ENCODE measurements at regions of chr18 and their contacts with region 1.

Region 1: DNA sequence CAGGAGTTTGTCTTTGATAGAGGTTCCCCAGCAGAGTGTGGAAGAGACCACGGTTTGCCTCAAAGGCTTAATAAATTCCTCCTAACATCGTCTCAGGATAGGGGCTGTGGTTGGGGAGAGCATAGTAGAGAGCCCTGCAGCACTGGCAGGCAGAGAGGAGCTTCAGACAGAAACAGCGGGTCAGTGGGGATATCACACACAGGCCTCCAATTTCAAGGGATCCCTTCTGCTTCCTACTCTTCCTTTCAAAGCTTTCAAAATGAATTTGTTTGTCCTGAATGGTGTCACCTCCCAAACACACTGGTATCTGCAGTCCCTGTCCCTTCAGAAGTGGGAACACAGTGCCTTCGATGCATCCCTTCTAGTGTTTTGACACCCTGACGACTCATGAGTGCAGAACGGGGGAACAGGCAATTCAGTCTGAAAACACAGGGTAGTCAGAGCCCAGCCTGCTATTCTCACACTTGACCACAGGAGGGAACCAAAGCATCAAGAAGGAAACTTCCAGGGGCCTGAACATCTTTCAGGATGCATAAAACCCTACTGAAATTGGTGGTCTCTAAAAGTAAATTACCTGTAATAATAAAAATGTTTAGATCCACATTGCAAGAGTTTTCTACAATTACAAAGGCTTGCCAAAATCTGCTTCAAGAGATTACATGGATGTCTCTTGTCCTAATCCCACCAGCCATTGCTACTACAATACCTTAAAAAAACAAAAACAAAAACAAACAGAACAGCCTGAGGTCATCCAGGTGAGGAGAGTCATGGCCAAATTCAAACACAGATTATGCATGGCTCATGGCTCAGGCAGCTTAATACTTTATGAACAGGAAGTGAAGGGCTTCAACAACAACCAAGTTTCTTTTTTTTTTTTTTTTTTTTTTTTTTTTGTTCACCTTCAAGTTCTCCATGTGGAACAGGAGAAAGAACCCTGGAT is 49.8 kb downstream of the SLC14A2 start:
- DNase-seq: peak; percentile 75
- H3K4me3 Mint-ChIP-seq: no peak overlapping the region
- H3K27ac Mint-ChIP-seq: peak overlapping the region; percentile 85
- H3K4me1 Mint-ChIP-seq: peaks cover 55% of the 10 kb centered on the region
- H3K27me3 Mint-ChIP-seq: peaks cover 2% of the 10 kb centered on the region

Region 2: DNA sequence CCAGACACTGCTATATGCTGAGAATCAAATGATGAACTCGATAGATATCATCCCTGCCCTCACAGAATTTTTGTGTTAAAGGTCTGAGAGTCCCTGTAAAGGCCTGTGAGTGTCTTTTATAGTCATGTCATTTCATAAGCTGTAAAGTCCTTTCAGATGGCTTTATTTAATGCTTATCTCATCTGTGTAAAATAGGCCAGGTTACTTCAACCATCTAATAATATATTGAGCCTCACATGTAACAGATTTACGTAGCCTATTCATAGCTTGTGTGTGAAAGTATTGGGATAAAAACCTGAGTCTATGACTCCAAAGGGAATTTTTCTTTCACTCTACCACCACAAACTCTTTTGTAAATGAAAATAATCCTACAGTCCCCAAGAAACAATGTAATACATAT is 1715.8 kb before region 1 on chr18:
- CTCF ChIA-PET with region 1: no interaction called
- POLR2A ChIA-PET with region 1: no interaction called
- DNase-seq: no peak
- H3K4me3 Mint-ChIP-seq: no peak overlapping the region
- H3K27ac Mint-ChIP-seq: no peak overlapping the region
- H3K4me1 Mint-ChIP-seq: no peaks in the 10 kb centered on the region
- H3K27me3 Mint-ChIP-seq: no peaks in the 10 kb centered on the region

Region 3: GRCh38 chr18:45503990-45504389 is 161.1 kb before region 1 on chr18:
- CTCF ChIA-PET with region 1: no interaction called
- POLR2A ChIA-PET with region 1: no interaction called
- DNase-seq: no peak
- H3K4me3 Mint-ChIP-seq: no peak overlapping the region
- H3K27ac Mint-ChIP-seq: no peak overlapping the region
- H3K4me1 Mint-ChIP-seq: no peaks in the 10 kb centered on the region
- H3K27me3 Mint-ChIP-seq: peaks cover 3% of the 10 kb centered on the region

Region 4: GRCh38 chr18:45686891-45687611 is 22.0 kb after region 1 on chr18:
- CTCF ChIA-PET with region 1: interaction called, 21 read pairs
- POLR2A ChIA-PET with region 1: interaction called, 4 read pairs
- DNase-seq: peak; percentile 76
- H3K4me3 Mint-ChIP-seq: peak overlapping the region; percentile 81
- H3K27ac Mint-ChIP-seq: peak overlapping the region; percentile 97
- H3K4me1 Mint-ChIP-seq: peaks cover 69% of the 10 kb centered on the region
- H3K27me3 Mint-ChIP-seq: peaks cover 32% of the 10 kb centered on the region

Region 5: GRCh38 chr18:45879681-45880655 is 214.9 kb after region 1 on chr18:
- CTCF ChIA-PET with region 1: interaction called, 23 read pairs
- POLR2A ChIA-PET with region 1: no interaction called
- DNase-seq: peak; percentile 68
- H3K4me3 Mint-ChIP-seq: no peak overlapping the region
- H3K27ac Mint-ChIP-seq: no peak overlapping the region
- H3K4me1 Mint-ChIP-seq: peaks cover 10% of the 10 kb centered on the region
- H3K27me3 Mint-ChIP-seq: no peaks in the 10 kb centered on the region

Region 6: DNA sequence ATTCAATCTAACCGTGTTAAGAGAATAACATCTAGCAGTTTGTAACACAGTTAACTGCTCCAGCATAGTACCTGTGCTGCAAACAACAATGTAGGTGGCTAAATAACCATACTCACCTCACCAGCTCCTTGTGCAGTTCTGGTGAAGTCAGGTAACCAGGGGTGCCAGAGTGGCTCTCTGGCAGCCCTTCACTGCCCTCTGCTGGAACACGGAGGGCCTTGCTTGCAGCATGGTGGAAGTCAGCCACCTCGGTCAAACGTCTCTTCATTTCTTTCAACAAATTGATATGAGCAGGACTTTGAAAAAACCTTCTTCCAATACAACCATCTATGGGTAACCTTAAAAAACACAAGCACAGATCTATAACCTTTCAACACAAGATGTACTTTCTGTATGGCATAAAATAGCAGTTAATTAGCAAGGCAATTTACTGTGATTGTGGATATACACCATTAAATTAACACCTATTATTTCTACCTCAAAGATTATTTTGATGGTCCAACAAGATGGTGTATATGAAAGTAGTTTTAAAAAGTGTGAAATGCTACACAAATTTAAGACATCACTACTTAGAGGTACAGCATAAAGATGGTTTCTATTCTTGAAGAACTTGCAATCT is 245.4 kb after region 1 on chr18:
- CTCF ChIA-PET with region 1: interaction called, 15 read pairs
- POLR2A ChIA-PET with region 1: no interaction called
- DNase-seq: peak; percentile 77
- H3K4me3 Mint-ChIP-seq: no peak overlapping the region
- H3K27ac Mint-ChIP-seq: no peak overlapping the region
- H3K4me1 Mint-ChIP-seq: no peaks in the 10 kb centered on the region
- H3K27me3 Mint-ChIP-seq: no peaks in the 10 kb centered on the region

Region 7: DNA sequence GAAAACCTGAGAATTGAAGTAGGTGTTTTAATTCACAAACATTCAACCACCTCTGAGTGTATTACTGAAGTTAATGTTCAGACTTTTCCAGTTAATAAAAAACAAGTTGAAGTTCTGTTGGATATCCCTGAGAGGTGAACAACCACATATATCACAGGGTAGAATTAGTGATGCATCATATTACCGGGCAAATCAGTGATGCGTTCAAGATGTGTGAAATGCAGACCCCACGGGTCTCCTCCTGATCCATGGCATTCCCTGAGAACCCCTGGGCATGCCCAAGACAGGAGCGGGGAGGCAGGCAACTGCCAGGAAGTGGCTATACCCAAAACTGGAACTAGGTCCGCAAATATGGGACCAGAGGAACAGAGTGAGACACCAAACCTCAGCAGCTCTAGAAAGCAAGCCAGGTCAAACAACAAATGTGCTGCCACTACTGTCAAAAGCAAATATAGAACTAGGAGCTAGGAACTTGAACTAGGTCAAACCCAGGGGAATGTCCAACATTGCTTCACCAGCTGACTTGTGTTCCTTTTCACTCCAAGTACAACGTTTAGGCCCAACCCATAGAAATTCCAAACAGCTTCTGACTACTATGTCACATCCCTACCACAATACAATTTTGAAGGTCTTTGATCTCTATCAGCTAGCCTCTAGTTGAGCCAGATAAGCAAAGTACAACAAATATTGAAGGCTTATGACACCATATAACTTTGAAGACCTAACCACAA is 386.8 kb after region 1 on chr18:
- CTCF ChIA-PET with region 1: no interaction called
- POLR2A ChIA-PET with region 1: no interaction called
- DNase-seq: no peak
- H3K4me3 Mint-ChIP-seq: no peak overlapping the region
- H3K27ac Mint-ChIP-seq: no peak overlapping the region
- H3K4me1 Mint-ChIP-seq: peaks cover 28% of the 10 kb centered on the region
- H3K27me3 Mint-ChIP-seq: no peaks in the 10 kb centered on the region

Measured in activated CD4-positive, alpha-beta T cell treated with anti-CD3 and anti-CD28 coated beads, Interleukin-2, amount 10 ng/mL, durations not matched to agents 7 days and 5 days (primary cell).